ENCODE measurements at regions of chr5 and their contacts with region 1.

Region 1: GRCh38 chr5:153964880-153965645 is 73.6 kb downstream of the FAM114A2 start:
- DNase-seq: no peak
- H3K4me3 ChIP-seq: no peak overlapping the region
- H3K27ac ChIP-seq: no peak overlapping the region
- H3K4me1 ChIP-seq: no peaks in the 10 kb centered on the region
- H3K27me3 ChIP-seq: no peaks in the 10 kb centered on the region
- CTCF ChIP-seq: peak; percentile 31 to 66 (median 62)
- POLR2A ChIP-seq: no peak

Region 2: DNA sequence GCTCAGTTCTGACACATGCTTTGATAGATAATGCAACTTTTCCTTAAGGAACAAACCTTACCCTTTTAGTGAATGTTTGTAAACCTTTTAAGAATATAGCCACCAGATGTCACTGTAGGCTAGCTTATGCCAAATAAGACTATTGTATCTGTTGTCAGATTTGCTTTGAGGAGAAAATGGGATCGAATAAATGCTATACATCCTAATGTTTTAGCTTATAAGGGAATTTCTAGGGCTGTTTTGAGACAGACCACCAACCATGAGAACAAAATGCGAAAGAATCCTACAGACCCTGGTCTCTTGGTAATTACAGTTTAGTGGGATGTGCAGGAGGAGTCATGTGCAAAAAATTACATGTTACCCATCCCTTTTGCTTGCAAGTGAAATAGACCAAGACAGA is 1432.3 kb before region 1 on chr5:
- intact Hi-C with region 1: loop called (anchors 2 kb)
- DNase-seq: no peak
- H3K4me3 ChIP-seq: no peak overlapping the region
- H3K27ac ChIP-seq: no peak overlapping the region
- H3K4me1 ChIP-seq: no peaks in the 10 kb centered on the region
- H3K27me3 ChIP-seq: no peaks in the 10 kb centered on the region
- CTCF ChIP-seq: peak in 3 of 4 experiments; percentile 45 to 55 (median 52)
- POLR2A ChIP-seq: no peak

Region 3: DNA sequence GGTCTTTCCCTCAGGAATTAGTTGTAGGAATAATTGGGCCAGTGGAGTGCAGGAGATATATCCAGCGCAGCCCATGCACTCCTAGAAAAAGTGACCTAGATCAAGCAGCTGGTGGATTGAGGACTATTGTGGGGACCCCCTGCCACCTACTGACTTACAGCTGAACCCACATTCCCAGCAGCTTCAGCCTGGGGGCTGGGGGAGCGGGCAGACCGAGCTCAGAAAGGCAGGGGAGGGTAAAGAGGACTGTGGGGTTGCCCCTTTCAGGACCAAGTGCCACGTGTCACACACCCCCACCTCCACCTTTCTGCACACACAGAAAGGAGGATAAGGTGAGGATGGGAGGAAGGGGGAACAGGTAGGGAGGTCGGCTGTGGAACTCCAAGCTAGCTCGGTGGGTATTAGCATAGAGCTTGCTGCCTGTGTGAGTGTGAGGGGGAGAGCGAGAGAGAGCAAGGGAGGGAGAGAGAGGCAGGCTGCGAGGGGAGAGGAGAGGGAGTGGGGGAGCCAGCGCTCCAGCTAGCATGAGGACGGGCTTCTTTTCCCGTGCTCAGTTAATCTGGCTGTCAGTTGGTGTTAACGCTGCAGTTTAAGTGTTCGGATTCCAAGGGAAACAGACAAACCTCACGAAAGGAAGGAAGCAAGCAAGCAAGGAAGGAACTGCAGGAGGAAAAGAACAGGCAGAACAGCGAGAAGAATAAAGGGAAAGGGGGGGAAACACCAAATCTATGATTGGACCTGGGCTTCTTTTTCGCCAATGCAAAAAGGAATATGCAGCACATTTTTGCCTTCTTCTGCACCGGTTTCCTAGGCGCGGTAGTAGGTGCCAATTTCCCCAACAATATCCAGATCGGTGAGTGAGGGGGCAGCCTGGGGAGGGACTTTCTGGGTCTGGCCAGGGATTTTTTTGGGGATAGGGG is 474.7 kb before region 1 on chr5 and contains the start of gene GRIA1:
- intact Hi-C with region 1: loop called (anchors 5 kb)
- DNase-seq: no peak
- H3K4me3 ChIP-seq: no peak within 1 kb of the TSS
- H3K27ac ChIP-seq: no peak within 1 kb of the TSS
- H3K4me1 ChIP-seq: no peaks in the 10 kb centered on the region
- H3K27me3 ChIP-seq: peaks cover 8% of the 10 kb centered on the region
- CTCF ChIP-seq: no peak
- POLR2A ChIP-seq: no peak
- total RNA-seq, gene GRIA1: 2.7 TPM in 1 of 2 donors, not detected in the other

Region 4: DNA sequence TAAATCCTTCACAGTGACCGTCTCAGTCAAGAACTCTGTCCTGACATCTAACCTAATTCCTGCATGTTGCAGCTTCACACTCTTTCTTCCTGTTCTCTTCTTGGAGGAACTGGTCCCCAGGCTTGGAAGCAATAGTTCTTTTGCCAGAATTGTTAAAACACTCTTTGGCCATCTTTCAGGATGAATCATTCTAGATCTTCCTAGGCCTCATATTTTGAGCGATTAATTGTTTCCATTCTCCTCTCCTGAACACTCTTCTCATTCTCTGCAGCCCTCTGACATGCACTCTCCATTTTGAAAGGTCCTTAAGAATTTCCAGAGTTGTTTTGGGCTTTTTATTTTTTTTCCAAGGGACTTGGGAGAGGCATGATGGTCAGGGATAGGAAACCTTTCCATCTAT is 12.2 kb before region 1 on chr5:
- intact Hi-C with region 1: no loop called
- DNase-seq: no peak
- H3K4me3 ChIP-seq: no peak overlapping the region
- H3K27ac ChIP-seq: no peak overlapping the region
- H3K4me1 ChIP-seq: no peaks in the 10 kb centered on the region
- H3K27me3 ChIP-seq: no peaks in the 10 kb centered on the region
- CTCF ChIP-seq: no peak
- POLR2A ChIP-seq: no peak

Measured in prostate gland (tissue), 2 donors.